ENCODE measurements at regions of chr11 and their contacts with region 1.

Region 1: DNA sequence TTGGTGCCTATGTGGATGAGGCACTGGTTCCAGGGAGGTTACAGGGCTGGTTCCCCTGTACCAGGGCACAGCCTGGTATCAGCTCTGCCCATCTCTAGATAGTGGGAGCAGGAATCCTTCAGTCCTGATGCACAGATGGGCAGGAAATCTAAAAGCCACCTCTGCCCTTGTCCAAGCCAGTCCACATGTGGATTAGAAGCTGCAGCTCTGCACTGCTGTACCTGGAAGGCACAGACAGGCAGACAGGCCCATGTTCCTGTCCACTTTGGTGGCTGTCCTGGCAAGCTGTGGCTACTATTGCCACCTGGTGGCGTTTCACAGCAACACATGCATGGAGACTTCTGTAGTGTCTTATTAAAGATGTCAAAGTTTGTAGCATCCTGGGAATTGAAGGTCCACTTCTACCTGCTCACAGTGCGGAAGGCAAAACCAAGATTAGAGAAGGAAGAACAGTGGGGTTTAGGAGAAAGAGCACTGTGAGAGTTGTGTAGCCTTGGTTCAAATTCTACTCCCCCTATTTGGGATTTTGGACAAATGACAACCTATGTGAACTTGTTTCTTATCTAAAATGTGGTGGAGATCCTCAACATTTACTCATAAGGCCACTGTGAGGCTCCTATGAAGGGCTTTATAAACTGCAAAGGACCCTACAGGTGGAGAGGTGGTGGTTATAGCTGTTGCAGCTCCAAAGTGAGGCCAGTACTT is 30.1 kb downstream of the NAV2 start:
- DNase-seq: peak; percentile 50
- H3K4me3 ChIP-seq: no peak overlapping the region
- H3K27ac ChIP-seq: no peak overlapping the region
- H3K27me3 ChIP-seq: no peaks in the 10 kb centered on the region
- CTCF ChIP-seq: peak; percentile 88

Region 2: DNA sequence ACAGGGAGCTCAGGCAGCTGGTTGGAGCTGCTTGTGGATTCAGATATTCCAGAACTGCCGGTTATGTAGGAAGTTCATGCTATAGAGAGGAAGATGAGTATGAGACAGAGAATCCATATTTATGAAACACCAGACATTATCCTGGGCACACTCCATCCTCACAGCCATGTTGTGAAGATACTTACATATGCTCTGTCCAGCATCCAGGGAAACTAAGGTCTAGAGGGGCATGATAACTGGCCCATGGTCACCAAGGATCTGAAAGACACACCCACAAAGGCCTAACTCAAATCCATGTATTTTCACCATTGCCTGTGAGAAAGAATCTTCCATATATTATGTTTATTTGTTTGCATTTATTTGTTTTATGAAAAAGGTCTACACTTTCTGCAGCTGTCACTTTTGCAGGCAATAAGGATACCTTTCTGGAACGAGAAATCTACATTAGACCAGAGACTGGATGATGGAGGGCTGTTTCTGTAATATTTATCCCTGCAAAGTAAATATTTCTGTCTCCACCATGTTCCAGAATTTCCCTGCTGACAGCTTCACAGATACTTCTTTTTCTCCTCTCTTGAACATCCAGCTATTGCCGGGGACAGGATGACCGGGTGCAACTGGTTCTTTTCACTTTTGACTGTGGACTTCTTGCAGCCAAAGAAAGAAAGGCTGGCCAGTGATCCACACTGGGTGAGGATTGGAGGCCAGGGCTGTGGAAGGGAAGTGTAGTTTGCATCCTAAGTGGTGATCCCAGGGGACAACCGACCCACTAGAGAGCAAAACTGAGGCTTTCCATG is 176.0 kb before region 1 on chr11:
- CTCF ChIA-PET with region 1: interaction called, 174 read pairs
- POLR2A ChIA-PET with region 1: no interaction called
- DNase-seq: no peak
- H3K4me3 ChIP-seq: no peak overlapping the region
- H3K27ac ChIP-seq: no peak overlapping the region
- H3K27me3 ChIP-seq: peaks cover 4% of the 10 kb centered on the region
- CTCF ChIP-seq: no peak

Region 3: GRCh38 chr11:19577976-19578619 is 164.6 kb before region 1 on chr11:
- CTCF ChIA-PET with region 1: interaction called, 13 read pairs
- POLR2A ChIA-PET with region 1: no interaction called
- DNase-seq: no peak
- H3K4me3 ChIP-seq: no peak overlapping the region
- H3K27ac ChIP-seq: peak overlapping the region; percentile 52
- H3K27me3 ChIP-seq: peaks cover 2% of the 10 kb centered on the region
- CTCF ChIP-seq: no peak

Region 4: DNA sequence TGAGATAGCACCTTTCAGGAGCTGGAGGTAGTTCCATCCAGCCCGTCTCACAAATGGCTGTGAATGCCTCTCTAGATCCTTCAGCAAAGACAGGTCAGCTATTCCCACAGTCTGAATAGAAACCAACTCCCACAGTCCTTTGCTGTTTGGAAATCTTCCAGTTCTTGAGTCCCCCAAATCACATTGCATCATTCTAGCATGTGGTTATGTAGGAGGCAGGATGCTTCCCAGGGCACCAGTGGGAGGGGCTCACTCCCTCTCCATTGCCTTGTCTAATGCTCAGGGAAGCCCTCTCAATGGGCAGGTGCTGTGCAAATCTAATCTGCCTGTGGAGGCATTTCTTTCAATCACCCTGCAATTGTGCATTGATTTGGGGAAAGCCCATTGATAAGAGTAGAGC is 15.5 kb before region 1 on chr11:
- CTCF ChIA-PET with region 1: interaction called, 12 read pairs
- POLR2A ChIA-PET with region 1: no interaction called
- DNase-seq: peak; percentile 44
- H3K4me3 ChIP-seq: no peak overlapping the region
- H3K27ac ChIP-seq: no peak overlapping the region
- H3K27me3 ChIP-seq: no peaks in the 10 kb centered on the region
- CTCF ChIP-seq: no peak

Measured in AG04450 (cell line).